ENCODE measurements at regions of chr1 and their contacts with region 1.

Region 1: DNA sequence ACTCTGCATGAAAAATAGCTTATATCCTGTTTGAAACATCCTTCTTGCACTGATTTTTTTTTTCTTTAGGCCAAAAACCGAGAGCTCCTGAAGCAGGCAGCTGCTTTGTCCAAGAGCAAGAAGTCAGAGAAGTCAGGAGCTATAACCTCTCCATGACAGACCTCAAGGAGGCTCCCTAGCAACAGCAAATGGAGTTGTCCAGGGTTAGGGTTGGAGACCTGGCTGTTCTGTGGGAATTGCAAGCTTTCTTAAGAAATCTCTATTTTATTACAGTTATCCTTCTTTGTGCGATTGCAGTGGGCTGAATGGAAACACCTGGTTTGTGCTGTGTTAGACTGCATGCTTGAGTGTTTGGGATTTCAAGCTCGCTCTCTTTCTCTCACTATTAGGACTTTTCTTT is 12.6 kb upstream of the STX12 start:
- DNase-seq: no peak
- ATAC-seq: no peak
- H3K4me3 ChIP-seq: no peak overlapping the region
- H3K4me3 Mint-ChIP-seq: no peak overlapping the region
- H3K27ac ChIP-seq: no peak overlapping the region
- H3K27ac Mint-ChIP-seq: no peak overlapping the region
- H3K4me1 ChIP-seq: no peaks in the 10 kb centered on the region
- H3K4me1 Mint-ChIP-seq: no peaks in the 10 kb centered on the region
- H3K27me3 ChIP-seq: no peaks in the 10 kb centered on the region
- H3K27me3 Mint-ChIP-seq: no peaks in the 10 kb centered on the region

Region 2: DNA sequence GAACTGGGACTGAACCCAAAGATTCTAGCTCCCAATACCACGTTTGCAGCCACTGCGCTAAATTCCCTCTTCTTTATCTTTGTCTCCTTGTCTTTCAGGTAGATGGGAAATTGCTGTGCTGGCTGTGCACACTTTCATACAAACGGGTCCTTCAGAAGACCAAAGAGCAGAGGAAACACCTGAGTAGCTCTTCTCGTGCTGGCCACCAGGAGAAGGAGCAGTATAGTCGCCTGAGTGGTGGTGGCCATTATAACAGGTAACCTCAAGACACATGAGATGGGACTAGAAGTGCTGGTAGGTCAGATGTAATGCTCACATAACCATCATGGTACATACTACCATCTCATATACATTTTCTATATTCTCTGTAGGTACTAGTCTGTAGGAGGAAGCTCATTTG is 15.9 kb before region 1 on chr1:
- CTCF ChIA-PET with region 1: interaction called in 1 of 2 experiments, 3 read pairs
- POLR2A ChIA-PET with region 1: interaction called in 1 of 2 experiments, 13 read pairs
- DNase-seq: no peak
- ATAC-seq: no peak
- H3K4me3 ChIP-seq: no peak overlapping the region
- H3K4me3 Mint-ChIP-seq: no peak overlapping the region
- H3K27ac ChIP-seq: no peak overlapping the region
- H3K27ac Mint-ChIP-seq: no peak overlapping the region
- H3K4me1 ChIP-seq: no peaks in the 10 kb centered on the region
- H3K4me1 Mint-ChIP-seq: no peaks in the 10 kb centered on the region
- H3K27me3 ChIP-seq: no peaks in the 10 kb centered on the region
- H3K27me3 Mint-ChIP-seq: no peaks in the 10 kb centered on the region

Region 3: DNA sequence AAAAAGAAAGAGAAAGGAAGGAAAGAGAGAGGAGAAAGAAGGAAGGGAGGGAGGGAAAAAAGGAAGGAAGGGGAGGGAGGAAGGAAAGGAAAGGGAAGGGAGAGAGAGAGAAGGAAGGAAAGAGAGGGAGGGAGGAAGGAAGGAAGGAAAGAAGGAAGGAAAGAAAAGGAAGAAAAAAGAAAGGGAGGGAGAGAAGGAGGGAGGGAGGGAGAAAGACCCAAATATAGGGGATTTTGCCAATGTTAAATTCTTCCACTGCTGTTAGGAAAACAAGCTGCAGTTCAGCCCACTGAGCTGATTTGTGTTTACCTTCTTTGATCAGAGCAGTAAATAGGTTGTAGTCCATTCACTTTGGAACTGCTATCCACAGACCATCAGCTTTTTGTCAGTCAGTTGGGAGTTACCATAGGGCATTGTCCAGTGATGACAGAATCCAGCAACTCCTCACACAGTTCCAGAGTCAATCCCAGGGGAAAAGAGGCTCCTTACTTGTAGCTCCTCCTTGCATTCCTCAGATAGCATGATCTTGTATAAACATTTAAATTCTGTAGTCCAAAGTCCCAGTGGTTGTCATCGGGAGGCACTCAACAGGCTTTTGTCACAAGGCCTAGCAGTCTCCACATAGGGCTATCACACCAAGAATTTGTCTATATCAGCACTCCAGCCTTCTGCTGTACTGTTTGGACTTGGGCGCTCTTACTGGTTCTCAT is 56.6 kb after region 1 on chr1:
- CTCF ChIA-PET with region 1: no interaction called
- POLR2A ChIA-PET with region 1: no interaction called
- DNase-seq: no peak
- ATAC-seq: no peak
- H3K4me3 ChIP-seq: no peak overlapping the region
- H3K4me3 Mint-ChIP-seq: no peak overlapping the region
- H3K27ac ChIP-seq: no peak overlapping the region
- H3K27ac Mint-ChIP-seq: no peak overlapping the region
- H3K4me1 ChIP-seq: no peaks in the 10 kb centered on the region
- H3K4me1 Mint-ChIP-seq: no peaks in the 10 kb centered on the region
- H3K27me3 ChIP-seq: no peaks in the 10 kb centered on the region
- H3K27me3 Mint-ChIP-seq: no peaks in the 10 kb centered on the region

Region 4: DNA sequence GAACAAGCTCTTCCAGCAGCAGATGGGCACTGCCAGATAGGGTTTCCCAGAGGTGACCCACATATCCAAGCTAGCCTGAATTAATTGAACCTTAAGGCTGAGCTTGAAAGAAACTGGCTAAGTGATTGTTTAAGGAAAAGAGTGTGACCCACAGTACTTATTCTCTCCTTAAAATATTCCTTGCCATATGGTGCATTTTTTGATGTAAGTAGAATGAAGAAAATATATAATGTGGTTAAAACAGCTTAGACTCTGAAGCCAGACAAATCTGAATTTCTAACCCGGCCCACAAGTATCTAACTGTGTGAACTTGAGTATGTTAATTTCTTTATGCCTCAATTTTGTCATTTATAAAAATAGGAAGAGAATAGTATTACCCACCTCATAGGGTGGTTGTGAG is 75.1 kb after region 1 on chr1:
- CTCF ChIA-PET with region 1: no interaction called
- POLR2A ChIA-PET with region 1: no interaction called
- DNase-seq: no peak
- ATAC-seq: no peak
- H3K4me3 ChIP-seq: no peak overlapping the region
- H3K4me3 Mint-ChIP-seq: no peak overlapping the region
- H3K27ac ChIP-seq: no peak overlapping the region
- H3K27ac Mint-ChIP-seq: no peak overlapping the region
- H3K4me1 ChIP-seq: peaks cover 10 to 19% of the 10 kb centered on the region in 2 experiments
- H3K4me1 Mint-ChIP-seq: peaks cover 12 to 52% (median 47%) of the 10 kb centered on the region in 3 donors
- H3K27me3 ChIP-seq: no peaks in the 10 kb centered on the region
- H3K27me3 Mint-ChIP-seq: no peaks in the 10 kb centered on the region

Region 5: GRCh38 chr1:28301471-28302174 is 541.2 kb after region 1 on chr1:
- CTCF ChIA-PET with region 1: no interaction called
- POLR2A ChIA-PET with region 1: interaction called in 1 of 2 experiments, 10 read pairs
- DNase-seq: no peak
- ATAC-seq: no peak
- H3K4me3 ChIP-seq: no peak overlapping the region
- H3K4me3 Mint-ChIP-seq: no peak overlapping the region
- H3K27ac ChIP-seq: no peak overlapping the region
- H3K27ac Mint-ChIP-seq: no peak overlapping the region
- H3K4me1 ChIP-seq: no peaks in the 10 kb centered on the region
- H3K4me1 Mint-ChIP-seq: no peaks in the 10 kb centered on the region
- H3K27me3 ChIP-seq: peaks cover 0 to 13% of the 10 kb centered on the region in 2 experiments
- H3K27me3 Mint-ChIP-seq: peaks cover 0 to 2% of the 10 kb centered on the region in 2 donors

Measured in T-cell (primary cell).